Posterior cingulate gyrus (tissue), 11 donors: ENCODE measurements at regions of chr20 and their contacts with region 1.

Region 1: GRCh38 chr20:59087829-59088433 is 45.3 kb upstream of the PRELID3B start:
- DNase-seq: peak; percentile 46 to 96 (median 88)

Region 2: DNA sequence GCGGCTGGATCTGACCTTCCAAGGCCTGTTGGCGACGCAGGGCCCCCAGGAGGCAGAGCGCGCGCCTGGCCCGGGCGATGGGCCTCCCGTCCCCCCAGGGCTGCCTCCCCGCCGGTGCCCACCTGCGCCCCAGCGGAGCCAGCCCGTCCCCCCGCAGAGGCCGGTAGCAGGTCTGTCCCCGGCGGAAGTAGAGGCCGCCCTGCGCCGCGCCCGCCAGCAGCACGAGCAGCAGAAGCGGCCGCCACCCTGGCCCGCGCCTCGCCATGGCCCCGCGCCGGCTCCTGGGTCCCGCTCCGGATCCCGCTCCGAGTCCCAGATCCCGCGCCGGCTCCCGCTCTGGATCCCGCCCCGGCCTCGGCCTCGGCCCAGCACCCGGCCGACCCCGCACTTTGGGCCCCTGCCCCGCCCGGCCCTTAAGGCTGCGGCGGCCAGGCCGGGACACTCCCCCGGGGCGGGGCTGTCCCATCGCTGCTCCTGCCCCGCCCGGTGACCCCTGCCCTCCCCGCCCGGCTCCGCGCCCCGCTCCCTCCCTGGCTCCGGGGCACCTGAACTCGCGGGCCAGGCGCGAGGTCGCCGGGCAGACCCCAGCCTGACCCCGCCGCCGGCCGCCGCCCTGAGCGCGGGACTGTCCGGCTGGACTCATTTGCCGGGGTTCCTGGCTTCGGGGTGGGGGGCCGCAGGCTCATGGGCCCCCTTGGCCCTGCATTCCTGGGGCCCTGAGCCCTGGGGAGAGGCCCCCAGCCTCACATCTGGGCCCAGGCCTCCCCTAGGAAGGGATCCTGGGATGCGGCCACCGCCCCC is 80.9 kb before region 1 on chr20 and contains the start of gene CTSZ:
- intact Hi-C with region 1: no loop called
- DNase-seq: peak in 4 of 10 donors; percentile 38 to 86 (median 81)

Region 3: GRCh38 chr20:59207742-59208357 is 119.9 kb after region 1 on chr20:
- intact Hi-C with region 1: loop called (anchors 1 kb)
- DNase-seq: peak in 6 of 10 donors; percentile 54 to 92 (median 65)

Region 4: DNA sequence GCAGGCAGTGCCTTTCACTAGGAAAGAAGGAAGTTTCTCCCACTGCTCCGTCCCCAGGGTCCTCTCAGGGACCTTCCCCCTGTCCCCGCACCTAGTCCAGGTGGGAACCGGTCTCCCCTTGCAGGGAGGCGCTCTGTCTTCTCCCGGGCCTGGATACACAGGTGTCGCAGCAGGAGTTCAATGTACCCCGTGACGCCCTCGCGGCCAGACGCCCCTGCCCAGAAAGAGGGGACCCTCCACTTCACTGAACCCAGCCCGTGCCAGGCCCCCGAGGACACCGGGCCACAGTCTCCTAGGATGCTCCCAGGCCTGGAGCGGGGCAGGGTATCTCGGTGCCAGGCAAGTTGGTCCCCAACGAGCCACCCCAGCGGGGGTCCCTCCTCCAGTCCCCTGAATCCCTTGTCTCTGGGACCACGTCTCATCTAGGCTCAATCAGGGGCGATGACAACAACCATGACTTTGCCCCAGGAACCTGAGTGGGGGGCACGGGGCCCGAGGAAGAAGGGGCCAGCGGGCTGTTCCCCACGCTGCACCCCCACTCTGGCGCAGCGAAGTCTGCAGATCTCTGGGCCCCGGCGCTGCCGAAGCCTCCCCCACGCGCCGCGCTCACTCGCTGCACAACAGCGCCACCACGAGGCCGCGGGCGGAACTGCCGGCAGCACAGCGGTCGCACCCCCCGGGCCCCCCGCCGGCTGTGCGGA is 315.5 kb after region 1 on chr20:
- intact Hi-C with region 1: loop called (anchors 1 kb)
- DNase-seq: peak; percentile 51 to 96 (median 74)